Sigmoid colon (tissue), 7 donors: ENCODE measurements at regions of chr10 and their contacts with region 1.

Region 1: GRCh38 chr10:90871766-90872647 is at the start of gene RPP30:
- DNase-seq: peak; percentile 89
- H3K4me3 ChIP-seq: peak within 1 kb of the TSS; percentile 66 to 74 (median 72)
- H3K27ac ChIP-seq: peak within 1 kb of the TSS; percentile 66 to 78 (median 70)
- H3K4me1 ChIP-seq: peaks cover 0 to 16% (median 14%) of the 10 kb centered on the region in 4 donors
- H3K27me3 ChIP-seq: no peaks in the 10 kb centered on the region
- CTCF ChIP-seq: no peak
- EP300 ChIP-seq: no peak
- POLR2A ChIP-seq: peak in 1 of 2 donors; percentile 25
- total RNA-seq, gene RPP30: 14.7 to 41.3 (median 33.3) TPM

Region 2: GRCh38 chr10:90751107-90751997 is 120.7 kb before region 1 on chr10:
- intact Hi-C with region 1: loop called (anchors 5 kb)
- DNase-seq: no peak
- H3K4me3 ChIP-seq: no peak overlapping the region
- H3K27ac ChIP-seq: no peak overlapping the region
- H3K4me1 ChIP-seq: no peaks in the 10 kb centered on the region
- H3K27me3 ChIP-seq: no peaks in the 10 kb centered on the region
- CTCF ChIP-seq: peak in 3 of 4 experiments; percentile 19 to 45 (median 31)
- EP300 ChIP-seq: no peak
- POLR2A ChIP-seq: no peak